OCI-LY7 (cell line): ENCODE measurements at regions of chr2 and their contacts with region 1.

Region 1: GRCh38 chr2:132430900-132431294 is 14.3 kb downstream of the GPR39 start:
- DNase-seq: no peak
- H3K4me3 ChIP-seq: no peak overlapping the region
- H3K27ac ChIP-seq: no peak overlapping the region
- H3K4me1 ChIP-seq: no peaks in the 10 kb centered on the region
- CTCF ChIP-seq: no peak

Region 2: GRCh38 chr2:132256251-132256902 is 174.5 kb before region 1 on chr2:
- CTCF ChIA-PET with region 1: no interaction called
- POLR2A ChIA-PET with region 1: no interaction called
- intact Hi-C with region 1: loop called (anchors 5 kb)
- DNase-seq: no peak
- H3K4me3 ChIP-seq: no peak overlapping the region
- H3K27ac ChIP-seq: no peak overlapping the region
- H3K4me1 ChIP-seq: no peaks in the 10 kb centered on the region
- CTCF ChIP-seq: no peak